CD8-positive, alpha-beta memory T cell (primary cell): ENCODE measurements at regions of chr7 and their contacts with region 1.

Region 1: GRCh38 chr7:151244196-151244840 is 4.2 kb downstream of the SMARCD3 start:
- DNase-seq: peak; percentile 47 to 69 (median 48)
- H3K4me3 ChIP-seq: no peak overlapping the region
- H3K4me3 Mint-ChIP-seq: peak overlapping the region; percentile 63 to 79 (median 74)
- H3K27ac ChIP-seq: no peak overlapping the region
- H3K27ac Mint-ChIP-seq: peak overlapping the region; percentile 7 to 95 (median 84)
- H3K4me1 ChIP-seq: peaks cover 42% of the 10 kb centered on the region
- H3K4me1 Mint-ChIP-seq: peaks cover 31 to 53% (median 34%) of the 10 kb centered on the region in 3 donors
- H3K27me3 ChIP-seq: peaks cover 29% of the 10 kb centered on the region
- H3K27me3 Mint-ChIP-seq: peaks cover 14% of the 10 kb centered on the region in 2 donors

Region 2: DNA sequence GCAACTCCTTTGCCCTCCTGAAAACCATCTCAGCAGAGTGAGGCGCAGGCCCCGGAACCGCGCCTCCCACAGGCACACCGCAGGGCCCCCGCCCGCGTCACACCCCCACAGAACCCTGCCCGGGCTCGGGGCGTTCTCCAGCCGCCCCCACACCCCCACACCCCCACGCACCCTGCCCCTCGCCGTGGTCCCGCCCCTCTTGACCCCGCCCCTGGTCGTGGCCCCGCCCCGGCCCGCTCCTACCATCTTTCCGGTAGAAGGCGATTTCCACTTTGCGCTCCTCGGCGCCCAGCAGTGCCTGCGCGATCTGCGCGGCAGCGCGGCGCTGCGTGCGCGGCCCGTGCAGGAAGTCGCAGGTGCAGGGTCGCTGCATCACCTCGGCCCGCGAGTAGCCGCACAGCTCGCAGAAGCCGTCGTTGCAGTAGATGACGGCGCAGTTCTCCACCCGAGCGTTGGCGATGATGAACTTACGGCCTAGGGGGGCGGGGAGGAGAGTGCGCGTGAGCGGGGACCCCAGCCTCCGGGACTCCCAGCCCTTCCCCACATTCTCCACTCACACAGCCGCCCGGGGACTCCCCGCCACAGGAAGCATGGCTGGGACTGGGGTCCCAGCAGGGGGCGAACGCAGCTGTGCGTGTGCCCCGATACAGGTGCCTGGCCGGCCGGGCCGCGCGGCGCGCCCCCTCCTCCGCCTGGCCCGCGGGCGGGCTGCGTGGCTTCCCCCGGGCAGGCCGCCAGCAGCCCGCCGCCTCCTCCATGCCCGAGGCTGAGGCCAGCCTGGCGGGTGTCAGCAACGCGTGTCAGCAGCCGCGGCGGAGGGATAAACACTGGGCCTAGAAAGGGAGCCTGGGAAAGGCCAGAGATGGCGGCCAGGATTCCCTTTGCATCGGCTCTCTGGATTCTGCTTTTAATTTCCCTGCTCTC is 269.6 kb before region 1 on chr7:
- CTCF ChIA-PET with region 1: no interaction called
- POLR2A ChIA-PET with region 1: no interaction called
- DNase-seq: peak; percentile 69 to 86 (median 78)
- H3K4me3 ChIP-seq: peak overlapping the region; percentile 78
- H3K4me3 Mint-ChIP-seq: peak overlapping the region; percentile 86 to 90 (median 88)
- H3K27ac ChIP-seq: peak overlapping the region; percentile 64
- H3K27ac Mint-ChIP-seq: peak overlapping the region; percentile 58 to 96 (median 87)
- H3K4me1 ChIP-seq: peaks cover 45% of the 10 kb centered on the region
- H3K4me1 Mint-ChIP-seq: peaks cover 32 to 46% (median 35%) of the 10 kb centered on the region in 3 donors
- H3K27me3 ChIP-seq: peaks cover 21% of the 10 kb centered on the region
- H3K27me3 Mint-ChIP-seq: peaks cover 24 to 25% of the 10 kb centered on the region in 2 donors

Region 3: GRCh38 chr7:151123822-151124464 is 120.4 kb before region 1 on chr7:
- CTCF ChIA-PET with region 1: interaction called, 21 read pairs
- POLR2A ChIA-PET with region 1: no interaction called
- DNase-seq: peak; percentile 72 to 86 (median 76)
- H3K4me3 ChIP-seq: no peak overlapping the region
- H3K4me3 Mint-ChIP-seq: no peak overlapping the region
- H3K27ac ChIP-seq: no peak overlapping the region
- H3K27ac Mint-ChIP-seq: peak overlapping the region in 2 of 8 donors; percentile 1 to 74
- H3K4me1 ChIP-seq: no peaks in the 10 kb centered on the region
- H3K4me1 Mint-ChIP-seq: peaks cover 5 to 7% (median 5%) of the 10 kb centered on the region in 3 donors
- H3K27me3 ChIP-seq: no peaks in the 10 kb centered on the region
- H3K27me3 Mint-ChIP-seq: no peaks in the 10 kb centered on the region

Region 4: DNA sequence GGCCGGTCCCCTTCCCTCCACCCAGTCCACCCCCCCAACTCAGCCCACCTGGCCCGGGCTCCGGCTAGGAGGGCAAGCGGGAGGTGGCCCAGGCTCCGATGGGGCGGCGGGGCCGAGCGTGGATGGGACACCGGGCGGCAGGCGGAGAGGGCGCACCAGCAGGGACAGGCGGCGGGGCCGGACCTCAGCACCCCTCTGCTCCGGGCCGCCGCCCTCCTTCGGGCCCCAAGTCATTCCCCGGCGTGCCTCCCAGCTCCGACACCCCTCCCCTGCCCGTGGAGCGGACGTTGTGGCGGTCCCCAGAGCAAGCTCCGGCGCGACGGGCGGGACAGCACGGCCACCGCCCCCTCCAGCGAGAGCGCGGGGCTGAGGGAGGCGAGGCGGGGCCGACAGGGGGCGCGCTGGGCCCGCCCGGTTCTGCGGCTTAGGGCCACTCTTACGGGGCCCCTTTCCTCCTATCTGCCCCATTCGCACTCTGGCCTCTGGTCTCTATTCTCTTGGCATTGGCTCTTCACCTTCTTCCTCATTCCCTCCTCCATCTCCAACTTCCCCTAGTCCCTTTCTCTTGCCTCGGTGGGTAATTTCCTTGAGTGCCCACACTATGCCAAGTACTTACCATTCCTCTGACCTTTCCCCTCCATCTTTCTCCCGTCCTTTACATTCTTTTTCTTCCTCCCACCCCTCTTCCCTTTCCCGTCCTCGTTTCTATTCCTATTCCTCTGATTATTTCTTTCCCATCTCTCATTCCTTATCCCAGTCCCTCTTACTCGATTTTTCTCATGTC is 76.1 kb before region 1 on chr7:
- CTCF ChIA-PET with region 1: interaction called, 12 read pairs
- POLR2A ChIA-PET with region 1: no interaction called
- DNase-seq: peak; percentile 46 to 69 (median 55)
- H3K4me3 ChIP-seq: no peak overlapping the region
- H3K4me3 Mint-ChIP-seq: peak overlapping the region; percentile 73 to 91 (median 79)
- H3K27ac ChIP-seq: no peak overlapping the region
- H3K27ac Mint-ChIP-seq: peak overlapping the region in 1 of 8 donors; percentile 24
- H3K4me1 ChIP-seq: peaks cover 5% of the 10 kb centered on the region
- H3K4me1 Mint-ChIP-seq: peaks cover 14 to 16% (median 15%) of the 10 kb centered on the region in 3 donors
- H3K27me3 ChIP-seq: peaks cover 34% of the 10 kb centered on the region
- H3K27me3 Mint-ChIP-seq: peaks cover 35 to 39% of the 10 kb centered on the region in 2 donors

Region 5: DNA sequence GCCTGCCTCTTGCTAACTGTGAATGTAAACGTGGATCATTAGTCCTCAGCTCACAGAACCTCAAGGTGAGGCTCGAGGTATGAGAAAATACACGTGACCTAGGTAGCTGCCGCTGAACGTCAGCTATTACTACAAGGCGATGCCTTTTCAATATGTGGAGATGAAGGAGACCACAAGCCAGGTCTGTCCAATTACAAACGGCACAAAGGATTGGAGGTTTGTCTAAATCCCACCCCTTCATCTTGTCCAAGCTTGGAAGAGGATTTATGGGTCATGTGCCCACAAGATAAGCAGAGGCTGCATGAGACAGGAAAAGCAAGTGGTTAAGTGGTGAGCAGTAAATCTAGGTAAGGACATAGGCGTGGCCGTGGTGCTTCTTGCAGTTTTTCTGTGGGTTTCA is 37.4 kb before region 1 on chr7:
- CTCF ChIA-PET with region 1: interaction called, 12 read pairs
- POLR2A ChIA-PET with region 1: no interaction called
- DNase-seq: peak in 3 of 5 donors; percentile 33 to 72 (median 41)
- H3K4me3 ChIP-seq: no peak overlapping the region
- H3K4me3 Mint-ChIP-seq: peak overlapping the region; percentile 13 to 77 (median 75)
- H3K27ac ChIP-seq: peak overlapping the region; percentile 14
- H3K27ac Mint-ChIP-seq: peak overlapping the region; percentile 86 to 100 (median 98)
- H3K4me1 ChIP-seq: peaks cover 29% of the 10 kb centered on the region
- H3K4me1 Mint-ChIP-seq: peaks cover 28 to 40% (median 39%) of the 10 kb centered on the region in 3 donors
- H3K27me3 ChIP-seq: peaks cover 2% of the 10 kb centered on the region
- H3K27me3 Mint-ChIP-seq: peaks cover 0 to 5% of the 10 kb centered on the region in 2 donors

Region 6: GRCh38 chr7:151226875-151227782 is 17.2 kb before region 1 on chr7 and contains the start of gene ABCF2:
- CTCF ChIA-PET with region 1: interaction called, 29 read pairs
- POLR2A ChIA-PET with region 1: interaction called, 10 read pairs
- DNase-seq: peak; percentile 94 to 98 (median 97)
- H3K4me3 ChIP-seq: peak within 1 kb of the TSS; percentile 99
- H3K4me3 Mint-ChIP-seq: peak within 1 kb of the TSS; percentile 87 to 100 (median 99)
- H3K27ac ChIP-seq: peak within 1 kb of the TSS; percentile 77
- H3K27ac Mint-ChIP-seq: peak within 1 kb of the TSS; percentile 89 to 99 (median 98)
- H3K4me1 ChIP-seq: peaks cover 34% of the 10 kb centered on the region
- H3K4me1 Mint-ChIP-seq: peaks cover 42 to 53% (median 52%) of the 10 kb centered on the region in 3 donors
- H3K27me3 ChIP-seq: no peaks in the 10 kb centered on the region
- H3K27me3 Mint-ChIP-seq: no peaks in the 10 kb centered on the region
- total RNA-seq, gene ABCF2: 86.5 to 95.1 TPM

Region 7: DNA sequence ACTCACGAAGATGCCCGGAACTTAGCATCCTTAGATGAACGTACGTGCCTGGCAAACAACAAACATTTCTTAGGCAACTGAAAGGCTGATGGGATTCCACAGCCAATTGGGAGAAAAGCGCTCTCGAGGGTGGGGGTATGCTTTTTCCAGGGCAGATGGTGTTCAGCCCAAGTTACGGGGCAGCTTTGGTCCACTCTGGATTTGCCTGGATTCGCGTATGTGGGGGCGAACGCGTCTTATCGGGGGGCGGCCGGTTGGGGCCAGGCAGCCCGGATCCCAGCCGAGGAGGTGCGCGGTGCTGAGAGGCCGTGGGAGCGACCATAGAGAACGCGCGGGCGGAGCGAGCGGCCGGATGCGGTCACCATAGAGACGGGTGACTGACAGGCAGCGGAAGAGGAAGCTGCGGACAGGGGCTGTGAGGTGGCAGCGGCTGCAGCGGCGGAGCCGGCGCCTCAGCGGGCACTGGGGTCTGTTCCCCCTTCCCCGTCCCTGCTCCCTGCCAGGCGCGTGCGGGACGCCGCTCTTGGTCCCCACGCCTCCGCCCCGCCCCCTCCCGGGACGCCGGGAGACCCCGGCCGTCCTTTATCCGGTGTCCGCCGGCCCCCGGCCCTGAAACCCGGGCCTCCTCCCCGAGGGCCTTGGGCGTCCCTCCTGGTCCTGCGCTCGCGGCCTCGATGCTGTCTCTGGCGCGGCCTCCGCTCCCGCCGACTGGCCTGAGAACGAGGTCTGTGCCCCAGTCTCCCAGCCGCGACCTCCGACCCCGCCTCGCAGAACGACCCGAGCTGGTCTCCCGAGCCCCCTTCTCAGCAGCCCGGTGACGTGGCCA is 12.0 kb before region 1 on chr7 and contains the start of gene CHPF2:
- CTCF ChIA-PET with region 1: interaction called, 29 read pairs
- POLR2A ChIA-PET with region 1: interaction called, 10 read pairs
- DNase-seq: peak; percentile 85 to 93 (median 86)
- H3K4me3 ChIP-seq: peak within 1 kb of the TSS; percentile 89
- H3K4me3 Mint-ChIP-seq: peak within 1 kb of the TSS; percentile 98 to 100 (median 100)
- H3K27ac ChIP-seq: peak within 1 kb of the TSS; percentile 96
- H3K27ac Mint-ChIP-seq: peak within 1 kb of the TSS; percentile 94 to 100 (median 99)
- H3K4me1 ChIP-seq: peaks cover 31% of the 10 kb centered on the region
- H3K4me1 Mint-ChIP-seq: peaks cover 39 to 64% (median 40%) of the 10 kb centered on the region in 3 donors
- H3K27me3 ChIP-seq: no peaks in the 10 kb centered on the region
- H3K27me3 Mint-ChIP-seq: no peaks in the 10 kb centered on the region
- total RNA-seq, gene CHPF2: 36.6 to 37.0 TPM